Dendritic cell treated with granulocyte-macrophage colony-stimulating factor and Interleukin-4, amounts not matched to agents 40 ng/mL and 50 ng/mL, for 4 days (primary cell): ENCODE measurements at regions of chr5 and their contacts with region 1.

Region 1: DNA sequence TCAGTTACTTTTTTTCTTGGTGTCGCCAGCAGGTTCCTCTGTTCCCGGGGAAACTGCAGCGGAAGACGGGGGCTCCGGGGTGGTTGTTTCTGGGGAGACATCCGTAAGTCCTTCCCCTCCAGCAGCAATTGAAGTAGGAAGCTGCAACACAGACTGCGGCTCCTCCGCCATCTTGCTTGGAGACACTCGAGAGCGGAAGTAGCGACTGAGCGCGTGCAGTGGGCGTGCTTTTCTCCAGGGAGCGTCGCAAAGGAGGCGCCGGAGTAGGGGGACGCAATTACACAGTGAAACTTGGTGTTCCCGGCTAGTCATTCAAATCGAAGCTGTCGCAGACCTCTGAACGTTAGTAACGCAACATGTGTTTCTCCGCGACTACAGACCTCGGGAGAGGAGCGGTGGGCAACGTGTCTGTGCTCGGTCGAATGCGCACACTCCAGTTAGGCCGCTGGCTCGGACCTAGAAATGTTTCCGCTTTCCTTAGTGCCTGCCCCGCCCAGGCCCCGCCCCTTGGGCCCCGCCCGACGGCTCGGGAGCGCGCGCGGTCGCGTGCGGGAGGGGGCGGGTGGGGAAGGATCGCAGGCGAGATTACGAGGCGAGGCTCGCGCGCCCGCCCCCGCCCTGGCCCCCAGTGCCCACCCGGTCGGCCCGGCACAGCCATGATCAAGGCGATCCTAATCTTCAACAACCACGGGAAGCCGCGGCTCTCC is at the starts of genes AP3S1 and ATG12:
- H3K4me3 Mint-ChIP-seq: peak within 1 kb of the TSS; percentile 93
- H3K27ac Mint-ChIP-seq: peak within 1 kb of the TSS; percentile 99
- H3K4me1 Mint-ChIP-seq: peaks cover 39% of the 10 kb centered on the region
- H3K27me3 Mint-ChIP-seq: no peaks in the 10 kb centered on the region

Region 2: GRCh38 chr5:115271295-115272050 is 570.1 kb before region 1 on chr5:
- intact Hi-C with region 1: loop called (anchors 5 kb)
- H3K4me3 Mint-ChIP-seq: peak overlapping the region; percentile 63
- H3K27ac Mint-ChIP-seq: peak overlapping the region; percentile 83
- H3K4me1 Mint-ChIP-seq: peaks cover 43% of the 10 kb centered on the region
- H3K27me3 Mint-ChIP-seq: no peaks in the 10 kb centered on the region

Region 3: DNA sequence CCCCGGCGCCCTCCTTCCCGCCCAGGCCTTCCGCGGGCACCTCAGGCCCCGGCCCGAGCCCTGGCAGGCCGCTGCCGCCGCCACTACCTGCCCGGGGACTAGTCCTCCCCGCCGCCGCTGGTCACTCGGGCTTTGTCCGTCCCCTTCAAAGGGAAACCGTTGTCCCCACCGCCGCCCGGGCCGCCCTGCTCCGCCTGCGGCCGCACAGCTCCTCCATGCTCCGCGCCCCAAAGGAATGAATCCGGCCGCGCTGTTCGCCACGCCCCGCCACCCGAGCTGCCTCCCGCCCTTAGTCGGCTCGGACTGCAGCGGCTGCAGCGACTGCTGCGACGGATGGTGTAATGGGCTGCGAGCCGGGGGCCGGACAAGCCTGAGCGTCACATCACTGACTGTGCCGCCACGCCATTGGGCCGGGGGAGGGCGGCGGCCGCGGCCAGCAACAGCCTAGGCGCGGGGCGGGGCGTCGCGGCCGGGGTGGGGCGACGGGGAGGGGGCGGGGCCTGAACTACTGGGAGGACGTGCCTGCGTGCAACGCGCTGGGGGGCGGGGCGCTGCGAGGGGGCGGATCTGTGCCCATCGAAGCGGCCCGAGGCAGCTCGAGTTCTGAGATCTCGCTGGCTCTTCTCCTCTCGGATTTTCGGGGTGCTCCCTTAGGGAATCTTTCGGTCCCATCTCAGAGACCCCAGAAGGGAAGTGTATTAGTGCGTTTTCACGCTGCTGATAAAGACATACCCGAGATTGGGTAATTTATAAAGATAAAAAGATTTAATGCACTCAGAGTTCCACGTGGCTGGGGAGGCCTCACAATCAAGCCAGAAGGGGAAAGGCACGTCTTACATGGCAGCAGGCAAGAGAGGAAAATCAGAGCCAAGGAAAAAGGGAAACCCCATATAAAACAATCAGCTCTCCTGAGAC is 296.8 kb before region 1 on chr5 and contains the start of gene FEM1C:
- intact Hi-C with region 1: loop called (anchors 2 kb)
- H3K4me3 Mint-ChIP-seq: peak within 1 kb of the TSS; percentile 95
- H3K27ac Mint-ChIP-seq: peak within 1 kb of the TSS; percentile 99
- H3K4me1 Mint-ChIP-seq: peaks cover 16% of the 10 kb centered on the region
- H3K27me3 Mint-ChIP-seq: peaks cover 1% of the 10 kb centered on the region

Region 4: GRCh38 chr5:115634343-115635132 is 207.0 kb before region 1 on chr5:
- intact Hi-C with region 1: loop called (anchors 2 kb)
- H3K4me3 Mint-ChIP-seq: peak overlapping the region; percentile 64
- H3K27ac Mint-ChIP-seq: peak overlapping the region; percentile 69
- H3K4me1 Mint-ChIP-seq: peaks cover 10% of the 10 kb centered on the region
- H3K27me3 Mint-ChIP-seq: peaks cover 4% of the 10 kb centered on the region

Region 5: DNA sequence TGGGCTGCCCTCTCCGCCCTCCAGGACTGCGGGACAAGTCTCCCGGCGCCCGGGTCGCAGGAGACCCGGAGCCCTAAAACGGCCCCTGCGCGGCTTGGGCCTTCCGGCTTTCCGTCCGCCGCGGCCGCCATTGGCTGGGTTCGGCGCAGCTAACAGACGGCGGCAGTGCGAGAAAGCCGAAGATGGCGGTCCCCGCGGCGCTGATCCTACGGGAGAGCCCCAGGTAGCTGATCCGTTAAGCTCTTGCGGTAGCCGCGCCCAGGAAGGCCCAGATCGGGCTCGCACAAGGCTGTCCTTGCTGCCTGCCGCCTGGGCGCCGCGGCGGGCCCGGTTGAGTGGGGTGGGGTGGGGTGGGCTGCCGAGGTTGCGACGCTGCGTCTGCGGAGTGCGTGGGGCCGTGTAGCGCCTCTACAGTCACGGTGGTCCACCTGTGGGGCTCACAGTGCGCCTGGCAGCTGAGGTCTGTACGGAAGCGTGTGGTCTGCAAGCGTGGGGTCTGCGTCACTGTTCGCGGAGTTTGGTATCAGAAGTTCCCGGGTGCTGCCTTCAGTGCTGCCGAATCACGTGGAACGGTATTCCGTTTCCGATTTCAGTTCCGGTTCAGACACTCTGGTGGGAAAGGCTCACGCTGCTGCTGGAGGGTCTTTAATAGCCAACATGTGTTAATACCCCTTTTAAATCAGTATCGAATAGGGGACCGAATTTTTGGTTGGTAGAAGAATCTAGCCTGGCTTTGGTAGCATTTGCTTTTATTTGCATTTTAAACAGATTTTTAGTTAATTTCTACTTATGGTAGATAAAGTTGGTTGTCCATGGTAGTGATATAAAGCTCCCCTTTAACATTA is 243.6 kb after region 1 on chr5 and contains the start of gene COMMD10:
- intact Hi-C with region 1: loop called (anchors 5 kb)
- H3K4me3 Mint-ChIP-seq: peak within 1 kb of the TSS; percentile 82
- H3K27ac Mint-ChIP-seq: peak within 1 kb of the TSS; percentile 94
- H3K4me1 Mint-ChIP-seq: peaks cover 25% of the 10 kb centered on the region
- H3K27me3 Mint-ChIP-seq: no peaks in the 10 kb centered on the region